Calu3 (cell line): ENCODE measurements at regions of chr9 and their contacts with region 1.

Region 1: DNA sequence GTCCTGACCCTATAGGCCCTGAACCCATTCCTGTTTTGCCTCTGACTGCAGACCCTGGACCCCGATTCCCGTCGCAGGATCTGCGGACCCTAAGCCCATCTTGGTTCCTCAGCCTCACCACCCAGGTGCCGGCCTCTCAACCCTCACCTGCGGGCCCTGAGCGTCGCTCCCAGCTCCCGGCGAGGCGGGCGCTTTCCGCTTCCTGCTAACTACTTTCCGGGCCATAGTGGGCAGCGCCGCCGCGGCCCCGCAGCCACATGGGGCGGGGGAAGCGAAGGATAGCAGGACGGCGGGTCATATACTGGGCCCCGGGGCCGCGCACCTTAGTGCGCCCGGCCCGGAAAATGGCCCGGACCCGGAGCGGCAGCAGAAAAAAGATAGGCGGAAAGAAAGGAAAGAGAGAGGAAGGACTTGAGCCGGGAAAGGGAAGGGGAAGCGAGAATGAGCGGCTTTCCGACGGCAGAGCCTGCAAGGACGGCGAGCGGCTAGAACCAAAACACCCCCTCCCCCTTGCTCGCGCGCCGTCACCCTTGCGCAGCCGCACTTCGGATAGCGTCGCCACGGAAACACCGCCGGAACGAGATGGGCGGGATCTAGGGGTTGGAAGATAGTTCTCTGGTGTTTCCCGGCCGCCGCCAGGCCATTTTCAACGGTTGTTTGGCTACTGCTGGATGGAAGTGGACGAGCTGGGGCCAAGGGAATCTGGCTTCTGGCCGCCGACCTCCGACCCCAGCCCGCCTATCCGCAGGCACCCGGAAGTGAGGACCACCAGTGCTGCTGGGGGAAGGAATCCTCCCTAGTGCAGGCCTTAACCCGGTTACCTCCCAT is at the start of gene DCAF12:
- DNase-seq: peak; percentile 83
- H3K4me3 Mint-ChIP-seq: peak within 1 kb of the TSS; percentile 86
- H3K27ac Mint-ChIP-seq: peak within 1 kb of the TSS; percentile 88
- H3K4me1 Mint-ChIP-seq: peaks cover 34% of the 10 kb centered on the region
- H3K27me3 Mint-ChIP-seq: no peaks in the 10 kb centered on the region
- CTCF ChIP-seq: no peak
- total RNA-seq, gene DCAF12: 20.8 and 24.4 TPM in 2 replicates

Region 2: GRCh38 chr9:34114436-34114835 is 12.0 kb before region 1 on chr9:
- CTCF ChIA-PET with region 1: no interaction called
- intact Hi-C with region 1: no loop called
- DNase-seq: no peak
- H3K4me3 Mint-ChIP-seq: no peak overlapping the region
- H3K27ac Mint-ChIP-seq: no peak overlapping the region
- H3K4me1 Mint-ChIP-seq: no peaks in the 10 kb centered on the region
- H3K27me3 Mint-ChIP-seq: no peaks in the 10 kb centered on the region
- CTCF ChIP-seq: no peak

Region 3: GRCh38 chr9:34185778-34186551 is 59.5 kb after region 1 on chr9:
- CTCF ChIA-PET with region 1: no interaction called
- intact Hi-C with region 1: loop called (anchors 10 kb)
- DNase-seq: peak; percentile 36
- H3K4me3 Mint-ChIP-seq: peak overlapping the region; percentile 19
- H3K27ac Mint-ChIP-seq: peak overlapping the region; percentile 42
- H3K4me1 Mint-ChIP-seq: peaks cover 15% of the 10 kb centered on the region
- H3K27me3 Mint-ChIP-seq: no peaks in the 10 kb centered on the region
- CTCF ChIP-seq: no peak

Region 4: GRCh38 chr9:34203275-34203991 is 77.0 kb after region 1 on chr9:
- CTCF ChIA-PET with region 1: no interaction called
- intact Hi-C with region 1: no loop called
- DNase-seq: no peak
- H3K4me3 Mint-ChIP-seq: no peak overlapping the region
- H3K27ac Mint-ChIP-seq: no peak overlapping the region
- H3K4me1 Mint-ChIP-seq: no peaks in the 10 kb centered on the region
- H3K27me3 Mint-ChIP-seq: no peaks in the 10 kb centered on the region
- CTCF ChIP-seq: no peak

Region 5: DNA sequence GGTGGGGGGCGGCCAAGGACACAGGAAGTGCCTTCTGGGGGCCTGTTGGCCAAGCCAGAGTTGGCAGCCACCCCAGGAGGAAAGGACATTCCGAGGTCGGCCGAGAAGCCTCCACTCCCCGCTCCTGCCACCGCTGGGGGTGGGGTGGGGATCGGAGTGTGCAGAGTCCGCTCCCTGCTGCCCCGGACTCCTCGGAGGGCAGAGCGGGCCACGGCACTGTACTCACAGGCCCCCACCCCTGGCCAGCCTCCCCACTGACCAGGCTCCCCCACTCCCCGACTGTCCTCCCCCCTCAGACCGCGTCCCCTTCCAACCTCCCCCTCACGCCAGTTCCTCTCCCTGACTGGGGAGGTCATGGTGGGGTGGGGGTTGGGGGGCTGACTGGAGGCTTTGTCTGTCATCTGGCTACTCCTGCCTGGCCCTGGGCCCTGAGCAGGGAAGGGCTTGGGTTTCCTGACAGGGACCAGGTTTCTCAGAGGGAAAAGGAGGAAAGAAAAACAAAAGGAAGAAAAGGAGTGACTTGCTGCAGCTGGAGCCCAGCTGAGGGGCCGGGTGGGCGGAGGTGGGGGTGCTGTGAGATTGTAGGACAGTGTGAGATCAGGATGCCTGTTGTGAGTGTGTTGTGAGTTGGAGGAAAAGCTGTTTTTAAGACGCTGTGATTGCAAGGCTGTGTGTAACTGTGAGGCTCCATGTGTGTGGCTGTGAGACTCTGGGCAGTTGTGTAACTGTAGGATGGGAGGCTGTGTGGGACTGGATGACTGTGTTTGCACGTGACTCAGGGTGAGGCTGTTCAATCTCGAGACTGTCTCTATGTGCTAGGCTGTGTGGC is 433.4 kb after region 1 on chr9:
- CTCF ChIA-PET with region 1: no interaction called
- intact Hi-C with region 1: no loop called
- DNase-seq: peak; percentile 8
- H3K4me3 Mint-ChIP-seq: no peak overlapping the region
- H3K27ac Mint-ChIP-seq: no peak overlapping the region
- H3K4me1 Mint-ChIP-seq: peaks cover 11% of the 10 kb centered on the region
- H3K27me3 Mint-ChIP-seq: peaks cover 84% of the 10 kb centered on the region
- CTCF ChIP-seq: no peak